PC-3 (cell line): ENCODE measurements at regions of chr2 and their contacts with region 1.

Region 1: GRCh38 chr2:49714454-49714853 is 560.1 kb upstream of the FSHR start:
- DNase-seq: no peak
- ATAC-seq: no peak
- H3K4me3 ChIP-seq: no peak overlapping the region
- H3K27ac ChIP-seq: no peak overlapping the region
- H3K4me1 ChIP-seq: no peaks in the 10 kb centered on the region
- H3K27me3 ChIP-seq: no peaks in the 10 kb centered on the region
- CTCF ChIP-seq: no peak

Region 2: GRCh38 chr2:47735136-47735869 is 1979.2 kb before region 1 on chr2:
- CTCF ChIA-PET with region 1: no interaction called
- POLR2A ChIA-PET with region 1: interaction called, 14 read pairs
- intact Hi-C with region 1: no loop called
- DNase-seq: no peak
- ATAC-seq: no peak
- H3K4me3 ChIP-seq: no peak overlapping the region
- H3K27ac ChIP-seq: no peak overlapping the region
- H3K4me1 ChIP-seq: no peaks in the 10 kb centered on the region
- H3K27me3 ChIP-seq: peaks cover 25% of the 10 kb centered on the region
- CTCF ChIP-seq: no peak